ENCODE measurements at regions of chr7 and their contacts with region 1.

Region 1: DNA sequence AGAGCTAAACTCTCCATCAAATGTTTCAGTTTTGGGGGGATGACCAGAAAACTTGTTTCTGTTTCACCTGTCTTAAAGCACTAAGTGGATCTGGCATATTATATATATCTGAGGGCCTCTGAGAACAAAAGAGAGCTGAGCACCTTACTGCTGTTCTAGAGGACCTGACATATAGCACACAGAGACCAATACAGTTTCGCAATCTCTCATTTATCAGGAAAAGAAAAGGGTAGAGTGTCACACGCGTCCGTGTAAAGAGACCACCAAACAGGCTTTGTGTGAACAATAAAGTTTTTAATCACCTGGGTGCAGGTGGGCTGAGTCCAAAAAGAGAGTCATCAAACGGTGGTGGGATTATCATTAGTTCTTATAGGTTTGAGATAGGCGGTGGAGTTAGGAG is 434.5 kb upstream of the KCND2 start:
- DNase-seq: no peak
- H3K4me3 ChIP-seq: no peak overlapping the region
- H3K27ac ChIP-seq: no peak overlapping the region
- H3K4me1 ChIP-seq: no peaks in the 10 kb centered on the region
- H3K27me3 ChIP-seq: no peaks in the 10 kb centered on the region
- CTCF ChIP-seq: no peak
- POLR2A ChIP-seq: no peak

Region 2: GRCh38 chr7:119620769-119621168 is 217.7 kb before region 1 on chr7:
- intact Hi-C with region 1: loop called (anchors 10 kb)
- DNase-seq: no peak
- H3K4me3 ChIP-seq: no peak overlapping the region
- H3K27ac ChIP-seq: no peak overlapping the region
- H3K4me1 ChIP-seq: no peaks in the 10 kb centered on the region
- H3K27me3 ChIP-seq: no peaks in the 10 kb centered on the region
- CTCF ChIP-seq: no peak
- POLR2A ChIP-seq: no peak

Region 3: GRCh38 chr7:119802147-119802546 is 36.3 kb before region 1 on chr7:
- intact Hi-C with region 1: no loop called
- DNase-seq: no peak
- H3K4me3 ChIP-seq: no peak overlapping the region
- H3K27ac ChIP-seq: no peak overlapping the region
- H3K4me1 ChIP-seq: no peaks in the 10 kb centered on the region
- H3K27me3 ChIP-seq: no peaks in the 10 kb centered on the region
- CTCF ChIP-seq: no peak
- POLR2A ChIP-seq: no peak